ENCODE measurements at regions of chr15 and their contacts with region 1.

Region 1: DNA sequence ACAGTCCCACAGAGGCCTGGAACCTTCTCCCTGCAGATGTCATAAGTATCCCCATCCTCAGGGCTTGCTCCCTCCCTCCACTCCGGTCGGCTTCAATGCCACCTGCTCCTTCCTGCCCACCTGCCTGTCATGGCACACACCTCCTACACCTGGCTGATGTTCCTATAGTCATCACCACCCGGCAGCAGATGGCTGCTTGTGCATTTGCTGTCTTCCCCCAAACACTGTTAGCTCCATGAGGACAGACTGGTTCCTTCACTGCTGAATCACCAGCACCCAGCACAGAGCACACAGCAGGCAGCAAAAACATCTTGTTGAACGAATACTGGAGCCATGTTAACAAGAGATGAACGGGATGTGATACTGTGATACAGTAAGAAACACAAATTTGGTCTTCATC is 14.8 kb downstream of the TARS3 start:
- DNase-seq: peak in 3 of 10 donors; percentile 43 to 55 (median 53)
- H3K4me3 ChIP-seq: no peak overlapping the region
- H3K27ac ChIP-seq: peak overlapping the region in 45 of 59 donors; percentile 8 to 99 (median 54)
- H3K27me3 ChIP-seq: no peaks in the 10 kb centered on the region
- CTCF ChIP-seq: no peak

Region 2: DNA sequence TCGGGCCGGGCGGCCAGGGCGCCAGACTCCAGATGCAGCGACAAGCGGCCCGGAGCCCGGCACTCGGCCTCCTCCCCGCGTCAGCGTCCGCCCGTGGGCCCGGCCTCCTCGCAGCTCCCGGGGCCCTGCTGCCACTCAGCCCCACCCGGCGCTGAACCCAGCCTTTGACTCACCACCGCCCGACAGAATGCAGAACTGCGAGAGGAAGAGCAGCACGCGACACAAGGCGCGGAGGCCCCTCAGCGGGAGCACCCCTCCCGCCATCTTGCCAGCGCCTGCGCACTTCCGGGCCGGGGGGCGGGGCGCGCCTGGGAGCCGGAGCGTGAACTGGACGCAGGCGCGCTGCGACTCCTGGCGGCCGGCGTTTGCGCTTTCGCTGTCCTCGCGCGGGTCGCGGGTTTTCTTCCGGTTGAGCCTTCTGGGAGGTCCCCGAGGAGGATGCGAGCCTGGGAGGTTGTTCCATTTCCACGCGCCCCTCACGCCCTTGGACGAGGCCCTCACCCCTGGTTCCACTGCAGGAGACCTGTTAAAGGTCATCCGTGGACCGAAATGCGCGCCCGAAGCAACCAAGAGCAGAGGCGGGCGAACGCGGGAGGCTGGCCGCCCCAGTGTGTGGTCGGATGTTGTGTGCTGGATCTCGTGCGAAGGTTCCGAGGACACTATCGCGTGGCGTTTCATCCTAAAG is 57.2 kb before region 1 on chr15 and contains the start of gene TM2D3:
- intact Hi-C with region 1: loop called in 1 of 2 experiments (anchors 2 kb)
- DNase-seq: peak; percentile 75 to 92 (median 90)
- H3K4me3 ChIP-seq: peak within 1 kb of the TSS; percentile 58 to 100 (median 91)
- H3K27ac ChIP-seq: peak within 1 kb of the TSS; percentile 82 to 99 (median 97)
- H3K27me3 ChIP-seq: no peaks in the 10 kb centered on the region
- CTCF ChIP-seq: peak; percentile 41 to 93 (median 80)
- total RNA-seq, gene TM2D3: 50.8 to 137 (median 106) TPM

Region 3: DNA sequence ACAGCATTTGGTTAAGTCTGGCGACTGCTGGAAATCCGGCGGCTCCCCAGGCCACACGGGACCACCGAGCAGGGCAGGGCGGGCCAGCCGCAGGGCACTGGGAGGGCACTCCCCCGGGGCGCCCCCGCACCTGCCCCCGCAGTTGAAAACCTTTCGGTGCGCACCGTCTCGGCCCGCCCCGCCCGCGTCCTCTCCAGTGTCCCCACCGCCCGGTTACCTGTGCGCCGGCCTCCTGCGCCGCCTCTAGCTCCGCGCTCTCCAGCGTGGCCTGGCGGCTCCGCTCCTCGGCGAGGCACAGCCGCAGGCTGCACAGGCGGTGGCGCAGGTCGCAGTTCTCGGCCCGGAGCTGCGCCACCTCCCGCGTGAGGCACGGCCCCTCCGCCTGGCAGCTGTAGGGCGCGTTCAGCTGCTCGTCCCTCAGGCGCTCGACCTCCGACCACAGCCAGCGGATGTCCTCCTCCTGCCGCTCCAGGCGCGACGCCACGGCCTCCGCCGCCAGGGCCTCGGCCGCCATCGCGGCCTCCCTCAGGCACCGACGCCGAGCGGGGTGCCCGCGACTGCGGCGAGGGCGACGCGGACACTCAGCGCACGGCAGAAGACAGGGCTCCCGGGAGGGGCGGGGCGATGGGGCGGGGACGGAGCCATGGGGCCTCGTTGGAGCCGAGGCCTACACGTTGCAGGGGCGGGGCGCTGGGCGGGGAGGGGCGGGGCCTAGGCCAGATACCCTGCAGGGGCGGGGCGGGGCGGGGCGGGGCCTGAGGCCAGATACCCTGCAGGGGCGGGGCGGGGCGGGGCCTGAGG is 14.6 kb after region 1 on chr15 and contains the start of gene TARS3:
- intact Hi-C with region 1: loop called in 1 of 2 experiments (anchors 2 kb)
- DNase-seq: peak; percentile 91 to 96 (median 94)
- H3K4me3 ChIP-seq: peak within 1 kb of the TSS; percentile 65 to 98 (median 90)
- H3K27ac ChIP-seq: peak within 1 kb of the TSS in 57 of 59 donors; percentile 32 to 94 (median 86)
- H3K27me3 ChIP-seq: no peaks in the 10 kb centered on the region
- CTCF ChIP-seq: peak in 24 of 56 donors; percentile 8 to 62 (median 24)
- total RNA-seq, gene TARS3: 33.7 to 81.2 (median 49.6) TPM